ENCODE measurements at regions of chr12 and their contacts with region 1.

Region 1: GRCh38 chr12:95217377-95218149 is at the starts of genes FGD6 and VEZT:
- DNase-seq: peak; percentile 100
- H3K4me3 ChIP-seq: peak within 1 kb of the TSS; percentile 66 to 79 (median 75)
- H3K27ac ChIP-seq: peak within 1 kb of the TSS; percentile 92 to 97 (median 96)
- H3K4me1 ChIP-seq: peaks cover 0 to 76% (median 41%) of the 10 kb centered on the region in 4 donors
- H3K27me3 ChIP-seq: no peaks in the 10 kb centered on the region
- CTCF ChIP-seq: peak in 2 of 4 experiments; percentile 25 to 34
- EP300 ChIP-seq: no peak
- POLR2A ChIP-seq: peak; percentile 72 to 79
- total RNA-seq, gene FGD6: 40.2 to 56.6 (median 50.4) TPM
- total RNA-seq, gene VEZT: 82.8 to 114 (median 90.5) TPM

Region 2: DNA sequence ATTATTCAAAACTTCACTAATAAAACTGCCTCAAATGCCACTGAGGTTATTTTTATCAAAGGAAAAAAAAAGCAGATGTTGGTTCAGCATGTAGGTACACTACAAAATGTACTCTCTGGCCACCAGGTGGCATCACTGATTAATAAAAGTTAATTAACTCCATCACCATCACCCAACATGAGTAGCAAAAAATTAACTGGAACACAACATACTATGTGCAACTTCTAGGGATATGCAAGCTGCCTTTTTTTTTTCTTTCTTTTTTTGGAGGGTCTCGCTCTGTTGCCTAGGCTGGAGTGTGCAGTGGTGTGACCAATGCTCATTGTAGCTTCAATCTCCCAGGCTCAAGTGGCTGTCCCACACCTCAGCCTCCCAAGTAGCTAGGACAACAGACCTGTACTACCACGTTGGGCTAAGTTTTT is 100.4 kb before region 1 on chr12:
- intact Hi-C with region 1: loop called (anchors 1 kb)
- DNase-seq: peak; percentile 83
- H3K4me3 ChIP-seq: no peak overlapping the region
- H3K27ac ChIP-seq: peak overlapping the region; percentile 66 to 81 (median 68)
- H3K4me1 ChIP-seq: peaks cover 0 to 40% (median 25%) of the 10 kb centered on the region in 4 donors
- H3K27me3 ChIP-seq: no peaks in the 10 kb centered on the region
- CTCF ChIP-seq: peak; percentile 60 to 78 (median 69)
- EP300 ChIP-seq: no peak
- POLR2A ChIP-seq: no peak

Region 3: DNA sequence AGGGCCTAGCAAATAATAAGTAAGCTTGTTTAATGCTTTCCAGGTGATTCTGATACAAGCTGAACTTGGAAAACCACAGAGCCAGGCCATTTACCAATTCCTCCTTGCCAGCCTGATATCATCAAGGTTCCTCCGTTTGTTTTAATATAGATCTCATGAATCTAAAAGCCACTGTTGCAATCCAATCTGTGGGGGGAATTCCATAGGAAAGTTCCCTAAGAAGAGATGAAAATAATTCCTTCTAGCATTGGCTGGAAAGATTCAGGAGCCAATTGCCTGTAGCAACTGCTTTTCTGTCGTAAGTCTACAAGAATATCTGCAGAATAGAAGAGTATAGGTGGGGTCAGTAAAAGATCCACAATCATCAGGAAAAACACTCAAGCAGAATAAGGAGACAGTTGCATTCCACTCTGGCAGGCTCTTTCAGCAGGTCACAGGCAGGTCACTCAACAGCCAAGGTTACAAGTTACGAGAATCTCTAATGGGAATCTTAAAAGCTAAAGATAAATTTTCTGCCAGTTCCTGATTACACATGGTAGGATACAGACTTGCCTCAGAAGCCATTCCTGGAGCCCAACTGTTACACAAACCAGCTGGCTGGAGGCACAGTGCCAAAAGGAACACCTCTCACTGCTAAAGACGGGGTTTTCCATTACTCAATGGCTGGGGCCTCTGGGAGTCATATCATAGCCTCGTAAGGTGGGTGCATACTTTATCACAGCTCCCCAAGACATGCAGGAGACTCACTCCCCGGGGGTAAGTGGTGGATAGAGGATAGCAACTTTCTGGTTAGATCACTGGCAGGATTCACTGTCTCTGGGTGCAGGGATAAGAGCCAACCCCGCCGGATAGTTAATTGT is 43.9 kb before region 1 on chr12:
- intact Hi-C with region 1: loop called (anchors 5 kb)
- DNase-seq: peak; percentile 97
- H3K4me3 ChIP-seq: no peak overlapping the region
- H3K27ac ChIP-seq: peak overlapping the region; percentile 59 to 85 (median 72)
- H3K4me1 ChIP-seq: peaks cover 0 to 30% (median 26%) of the 10 kb centered on the region in 4 donors
- H3K27me3 ChIP-seq: no peaks in the 10 kb centered on the region
- CTCF ChIP-seq: no peak
- EP300 ChIP-seq: peak in 3 of 4 donors; percentile 60 to 65 (median 64)
- POLR2A ChIP-seq: no peak

Region 4: GRCh38 chr12:95336390-95337067 is 119.0 kb after region 1 on chr12:
- intact Hi-C with region 1: loop called (anchors 5 kb)
- DNase-seq: peak; percentile 89
- H3K4me3 ChIP-seq: peak overlapping the region in 2 of 4 donors; percentile 8 to 24
- H3K27ac ChIP-seq: peak overlapping the region; percentile 81 to 87 (median 84)
- H3K4me1 ChIP-seq: peaks cover 0 to 40% (median 27%) of the 10 kb centered on the region in 4 donors
- H3K27me3 ChIP-seq: no peaks in the 10 kb centered on the region
- CTCF ChIP-seq: peak; percentile 45 to 76 (median 61)
- EP300 ChIP-seq: no peak
- POLR2A ChIP-seq: no peak

Region 5: DNA sequence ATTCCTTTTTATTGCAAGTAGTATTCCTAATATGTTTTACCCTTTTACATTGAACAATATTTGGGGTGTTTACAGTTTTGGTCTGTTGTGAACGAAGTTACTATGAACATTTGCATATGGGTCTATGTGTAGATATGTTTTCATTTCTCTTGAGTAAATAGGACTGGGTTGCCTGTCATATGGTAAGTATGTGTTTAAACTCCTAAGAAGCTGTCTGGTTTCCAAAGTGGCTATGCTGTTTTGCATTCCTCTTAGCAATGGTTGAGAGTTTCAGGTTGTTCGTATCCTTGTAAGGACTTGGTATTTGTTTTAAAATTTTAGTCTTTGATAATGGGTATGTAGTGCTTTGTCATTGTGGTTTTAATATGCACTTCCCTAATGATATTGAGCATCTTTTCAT is 262.7 kb after region 1 on chr12:
- intact Hi-C with region 1: loop called (anchors 5 kb)
- DNase-seq: no peak
- H3K4me3 ChIP-seq: no peak overlapping the region
- H3K27ac ChIP-seq: no peak overlapping the region
- H3K4me1 ChIP-seq: peaks cover 0 to 75% (median 40%) of the 10 kb centered on the region in 4 donors
- H3K27me3 ChIP-seq: no peaks in the 10 kb centered on the region
- CTCF ChIP-seq: no peak
- EP300 ChIP-seq: no peak
- POLR2A ChIP-seq: no peak

Region 6: GRCh38 chr12:96237465-96238077 is 1020.0 kb after region 1 on chr12:
- intact Hi-C with region 1: loop called (anchors 10 kb)
- DNase-seq: peak; percentile 93
- H3K4me3 ChIP-seq: no peak overlapping the region
- H3K27ac ChIP-seq: peak overlapping the region; percentile 92 to 97 (median 95)
- H3K4me1 ChIP-seq: peaks cover 0 to 99% (median 97%) of the 10 kb centered on the region in 4 donors
- H3K27me3 ChIP-seq: no peaks in the 10 kb centered on the region
- CTCF ChIP-seq: no peak
- EP300 ChIP-seq: peak in 3 of 4 donors; percentile 14 to 93 (median 79)
- POLR2A ChIP-seq: no peak